Endothelial cell of umbilical vein (primary cell): ENCODE measurements at regions of chr1 and their contacts with region 1.

Region 1: DNA sequence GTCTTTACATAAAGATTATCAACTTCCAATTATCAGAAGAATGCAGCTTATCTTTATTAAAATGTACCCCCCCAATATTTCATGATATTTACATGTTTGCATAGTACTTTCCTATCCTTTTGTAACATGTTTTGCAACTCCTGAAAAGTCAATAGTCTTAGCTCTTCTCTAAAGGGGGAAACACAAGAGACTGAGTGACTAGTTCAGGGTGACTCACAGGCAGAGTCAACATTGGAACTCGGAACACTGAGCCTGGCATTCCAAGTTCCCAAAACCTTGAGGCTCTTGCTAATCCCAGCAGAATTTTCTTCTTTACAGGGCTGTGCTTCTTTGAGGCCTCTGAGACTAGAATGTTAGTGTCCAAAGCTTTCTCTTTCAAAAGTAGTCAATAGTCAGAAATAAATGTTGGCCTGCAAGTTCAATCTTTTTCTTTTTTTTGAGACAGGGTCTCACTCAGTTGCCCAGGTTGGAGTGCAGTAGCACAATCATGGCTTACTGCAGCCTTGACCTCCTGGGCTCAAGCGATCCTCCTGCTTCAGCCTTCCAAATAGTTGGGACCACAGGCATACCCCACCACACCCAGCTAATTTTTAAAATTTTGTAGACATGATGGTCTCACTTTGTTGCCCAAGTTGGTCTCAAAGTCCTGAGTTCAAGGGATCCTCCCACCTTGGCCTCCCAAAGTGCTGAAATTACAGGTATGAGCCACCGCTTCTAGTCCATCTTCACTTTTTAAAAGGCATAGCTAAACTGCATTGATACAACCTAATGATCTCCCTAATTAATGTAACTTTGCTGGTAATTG is 37.6 kb downstream of the ZNF281 start:
- DNase-seq: peak; percentile 39
- H3K4me3 ChIP-seq: no peak overlapping the region
- H3K27ac ChIP-seq: no peak overlapping the region
- H3K4me1 ChIP-seq: no peaks in the 10 kb centered on the region
- H3K27me3 ChIP-seq: no peaks in the 10 kb centered on the region
- CTCF ChIP-seq: no peak
- POLR2A ChIP-seq: no peak

Region 2: GRCh38 chr1:199976496-199977144 is 395.7 kb before region 1 on chr1:
- CTCF ChIA-PET with region 1: no interaction called
- POLR2A ChIA-PET with region 1: no interaction called
- dilution Hi-C with region 1: no loop called
- intact Hi-C with region 1: no loop called
- DNase-seq: no peak
- H3K4me3 ChIP-seq: no peak overlapping the region
- H3K27ac ChIP-seq: no peak overlapping the region
- H3K4me1 ChIP-seq: no peaks in the 10 kb centered on the region
- H3K27me3 ChIP-seq: no peaks in the 10 kb centered on the region
- CTCF ChIP-seq: no peak
- POLR2A ChIP-seq: no peak

Region 3: DNA sequence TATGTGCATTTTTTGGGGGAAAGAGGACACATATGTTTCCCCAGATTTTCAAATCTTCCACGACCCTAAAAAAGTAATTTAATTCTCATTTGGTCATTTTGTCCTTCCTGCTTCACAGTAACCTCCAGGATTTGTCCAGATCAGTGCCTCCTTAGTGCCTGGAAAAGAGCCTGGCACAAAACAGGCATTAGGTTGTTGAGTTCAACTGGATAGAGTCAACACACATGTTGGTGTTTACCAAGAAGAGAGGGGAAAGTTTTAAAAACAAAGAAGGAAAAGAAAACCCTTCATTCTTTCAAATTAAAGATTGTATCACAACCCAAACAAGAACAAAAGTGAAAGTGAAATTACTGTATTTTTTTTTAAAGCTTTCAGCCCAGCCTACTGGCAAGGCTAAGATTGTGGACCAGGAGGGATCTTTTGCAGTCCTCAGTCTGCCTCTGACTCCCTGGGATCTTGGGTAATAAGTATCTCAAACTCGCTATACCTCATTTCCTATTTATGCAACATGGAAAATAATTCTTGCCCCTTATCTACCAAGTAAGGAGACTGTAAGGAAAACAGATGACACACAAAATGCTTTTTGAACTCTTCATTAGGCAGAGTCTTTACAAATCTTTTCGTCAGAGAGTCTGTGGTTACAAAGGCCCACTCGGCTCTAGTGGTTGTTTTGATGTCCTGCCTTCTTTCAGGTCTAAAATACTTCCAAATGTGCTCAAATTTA is 20.3 kb before region 1 on chr1:
- CTCF ChIA-PET with region 1: no interaction called
- POLR2A ChIA-PET with region 1: no interaction called
- dilution Hi-C with region 1: no loop called
- intact Hi-C with region 1: loop called (anchors 2 kb)
- DNase-seq: peak; percentile 56
- H3K4me3 ChIP-seq: peak overlapping the region in 1 of 3 experiments; percentile 30
- H3K27ac ChIP-seq: no peak overlapping the region
- H3K4me1 ChIP-seq: peaks cover 3% of the 10 kb centered on the region
- H3K27me3 ChIP-seq: no peaks in the 10 kb centered on the region
- CTCF ChIP-seq: no peak
- POLR2A ChIP-seq: no peak